A549 (cell line): ENCODE measurements at regions of chr18 and their contacts with region 1.

Region 1: DNA sequence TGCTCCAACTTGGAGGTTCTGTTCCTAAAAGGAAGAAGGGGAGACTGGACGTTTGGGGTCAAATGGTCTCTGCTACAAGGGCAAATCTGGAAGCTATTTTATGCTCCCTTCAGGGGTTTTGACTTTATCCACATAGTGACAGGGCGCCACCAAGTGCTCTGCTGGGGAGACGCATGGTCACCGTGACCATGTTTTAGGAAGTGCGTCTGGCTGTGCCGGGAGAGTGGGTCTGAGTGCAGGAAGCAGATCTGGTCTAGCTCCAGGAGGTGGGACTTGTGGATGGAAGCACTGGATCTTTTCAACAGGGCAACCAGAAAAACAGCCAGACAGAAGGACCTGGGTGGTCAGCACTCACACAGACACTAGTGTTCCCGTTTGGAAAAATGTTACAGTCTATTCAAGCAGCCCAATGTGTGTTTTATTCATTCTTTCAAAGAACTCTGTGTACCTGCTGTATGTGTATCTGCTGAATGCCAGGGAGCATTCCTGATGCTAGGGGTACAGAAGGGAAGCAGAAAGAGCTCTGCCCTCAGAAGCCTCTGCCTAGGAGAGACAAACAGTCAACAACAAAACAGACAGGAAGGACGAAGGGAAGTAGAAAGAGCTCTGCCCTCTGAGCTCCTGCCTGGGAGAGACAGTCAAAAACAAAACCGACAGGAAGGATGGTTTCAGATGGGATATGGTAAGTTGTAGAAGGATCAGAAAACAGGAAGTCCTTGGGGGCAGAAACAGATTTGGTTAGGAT is 14.3 kb downstream of the IMPA2 start:
- DNase-seq: peak; percentile 63 to 77
- ATAC-seq: peak; percentile 85 to 86
- H3K4me3 ChIP-seq: peak overlapping the region; percentile 24; the same call in 2 of the 3 replicates
- H3K27ac ChIP-seq: peak overlapping the region; percentile 85 to 96
- H3K4me1 ChIP-seq: peaks cover 44% of the 10 kb centered on the region
- CTCF ChIP-seq: peak; percentile 77
- EP300 ChIP-seq: no peak
- POLR2A ChIP-seq: no peak
- RAD21 ChIP-seq: peak; percentile 88 to 89

Region 2: GRCh38 chr18:11607906-11608305 is 387.7 kb before region 1 on chr18:
- CTCF ChIA-PET with region 1: no interaction called
- POLR2A ChIA-PET with region 1: no interaction called
- DNase-seq: no peak
- ATAC-seq: no peak
- H3K4me3 ChIP-seq: no peak overlapping the region
- H3K27ac ChIP-seq: no peak overlapping the region
- H3K4me1 ChIP-seq: no peaks in the 10 kb centered on the region
- CTCF ChIP-seq: no peak
- EP300 ChIP-seq: no peak
- POLR2A ChIP-seq: no peak
- RAD21 ChIP-seq: no peak

Region 3: GRCh38 chr18:11654736-11655605 is 340.6 kb before region 1 on chr18:
- CTCF ChIA-PET with region 1: interaction called, 43 read pairs
- POLR2A ChIA-PET with region 1: no interaction called
- DNase-seq: peak; percentile 37 to 65
- ATAC-seq: peak; percentile 88 to 93
- H3K4me3 ChIP-seq: 0 out of 3 replicates have a peak overlapping the region, but pooled peaks have one; percentile 29
- H3K27ac ChIP-seq: 0 out of 6 replicates have a peak overlapping the region, but pooled peaks of 1 of the 2 experiments have one; percentile 18
- H3K4me1 ChIP-seq: no peaks in the 10 kb centered on the region
- CTCF ChIP-seq: peak; percentile 78
- EP300 ChIP-seq: no peak
- POLR2A ChIP-seq: no peak
- RAD21 ChIP-seq: peak; percentile 76 to 84

Region 4: GRCh38 chr18:11859903-11860407 is 135.7 kb before region 1 on chr18:
- CTCF ChIA-PET with region 1: interaction called, 10 read pairs
- POLR2A ChIA-PET with region 1: no interaction called
- DNase-seq: peak; percentile 67 to 92
- ATAC-seq: peak; percentile 36 to 55; a peak in 5 of 6 replicates
- H3K4me3 ChIP-seq: peak overlapping the region; percentile 54
- H3K27ac ChIP-seq: peak overlapping the region; percentile 98 to 99
- H3K4me1 ChIP-seq: peaks cover 45% of the 10 kb centered on the region
- CTCF ChIP-seq: peak; percentile 27; the same call in 2 of the 3 replicates
- EP300 ChIP-seq: peak; percentile 56 to 84; a peak in 3 of 5 replicates
- POLR2A ChIP-seq: no peak
- RAD21 ChIP-seq: peak; percentile 25 to 32; a peak in 3 of 5 replicates

Region 5: GRCh38 chr18:11947214-11948191 is 48.1 kb before region 1 on chr18:
- CTCF ChIA-PET with region 1: interaction called, 435 read pairs
- POLR2A ChIA-PET with region 1: interaction called, 11 read pairs
- DNase-seq: peak in 1 of 2 experiments; percentile 98
- ATAC-seq: peak; percentile 91
- H3K4me3 ChIP-seq: peak overlapping the region; percentile 49
- H3K27ac ChIP-seq: peak overlapping the region; percentile 98 to 100
- H3K4me1 ChIP-seq: peaks cover 35% of the 10 kb centered on the region
- CTCF ChIP-seq: no peak
- EP300 ChIP-seq: no peak
- POLR2A ChIP-seq: no peak; the same call in 1 of the 2 replicates
- RAD21 ChIP-seq: peak in 1 of 2 experiments; percentile 1; a peak in 1 of 5 replicates

Region 6: DNA sequence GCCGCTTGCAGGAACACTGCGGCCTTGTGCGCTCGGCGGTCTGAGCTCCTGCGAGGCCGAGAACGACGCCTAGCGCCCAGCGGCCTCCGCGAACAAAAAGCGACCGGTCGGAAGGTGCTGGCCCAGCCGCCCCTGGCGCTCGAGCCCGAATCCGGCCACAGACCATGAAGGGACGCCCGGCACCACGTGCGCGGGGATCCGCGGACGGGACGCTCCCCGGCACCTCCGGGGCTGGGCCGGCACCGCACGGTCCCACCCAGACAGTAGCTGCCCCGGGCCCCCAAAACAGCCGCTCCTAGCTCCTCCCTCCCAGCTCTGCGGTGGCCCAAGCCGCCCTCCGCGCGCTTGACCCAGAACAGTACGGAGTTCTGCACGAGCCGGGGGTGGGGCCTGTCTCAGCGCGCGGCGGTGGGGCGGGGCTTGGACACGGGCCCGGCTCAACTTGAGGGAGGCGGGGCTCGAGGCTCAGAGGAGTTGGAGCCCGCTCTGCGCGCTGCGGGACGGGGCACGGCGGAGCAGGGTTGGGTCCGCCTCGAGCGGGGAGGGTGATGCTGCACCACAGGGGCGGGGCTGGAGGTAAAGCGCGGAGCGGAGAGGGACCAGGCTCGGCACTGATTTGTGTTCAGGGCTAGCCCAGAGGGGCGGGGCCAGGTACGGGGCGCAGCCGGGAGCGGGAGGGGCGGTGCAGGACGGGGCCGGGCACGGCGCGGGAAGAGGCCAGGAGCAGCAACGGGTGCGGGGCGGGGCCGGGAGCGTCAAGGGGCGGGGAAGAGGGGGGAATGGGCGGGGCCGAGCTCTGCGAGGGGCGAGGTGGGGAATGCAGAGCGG is 14.8 kb before region 1 on chr18:
- CTCF ChIA-PET with region 1: interaction called, 51 read pairs
- POLR2A ChIA-PET with region 1: interaction called, 27 read pairs
- DNase-seq: peak; percentile 87 to 98
- ATAC-seq: peak; percentile 87 to 95
- H3K4me3 ChIP-seq: peak overlapping the region; percentile 55
- H3K27ac ChIP-seq: peak overlapping the region; percentile 97 to 99
- H3K4me1 ChIP-seq: peaks cover 36% of the 10 kb centered on the region
- CTCF ChIP-seq: no peak
- EP300 ChIP-seq: no peak
- POLR2A ChIP-seq: peak; percentile 67
- RAD21 ChIP-seq: no peak

Region 7: GRCh38 chr18:12015416-12016062 is 19.9 kb after region 1 on chr18:
- CTCF ChIA-PET with region 1: interaction called, 13 read pairs
- POLR2A ChIA-PET with region 1: no interaction called
- DNase-seq: no peak
- ATAC-seq: no peak
- H3K4me3 ChIP-seq: no peak overlapping the region
- H3K27ac ChIP-seq: no peak overlapping the region
- H3K4me1 ChIP-seq: no peaks in the 10 kb centered on the region
- CTCF ChIP-seq: no peak
- EP300 ChIP-seq: no peak
- POLR2A ChIP-seq: no peak
- RAD21 ChIP-seq: no peak

Region 8: DNA sequence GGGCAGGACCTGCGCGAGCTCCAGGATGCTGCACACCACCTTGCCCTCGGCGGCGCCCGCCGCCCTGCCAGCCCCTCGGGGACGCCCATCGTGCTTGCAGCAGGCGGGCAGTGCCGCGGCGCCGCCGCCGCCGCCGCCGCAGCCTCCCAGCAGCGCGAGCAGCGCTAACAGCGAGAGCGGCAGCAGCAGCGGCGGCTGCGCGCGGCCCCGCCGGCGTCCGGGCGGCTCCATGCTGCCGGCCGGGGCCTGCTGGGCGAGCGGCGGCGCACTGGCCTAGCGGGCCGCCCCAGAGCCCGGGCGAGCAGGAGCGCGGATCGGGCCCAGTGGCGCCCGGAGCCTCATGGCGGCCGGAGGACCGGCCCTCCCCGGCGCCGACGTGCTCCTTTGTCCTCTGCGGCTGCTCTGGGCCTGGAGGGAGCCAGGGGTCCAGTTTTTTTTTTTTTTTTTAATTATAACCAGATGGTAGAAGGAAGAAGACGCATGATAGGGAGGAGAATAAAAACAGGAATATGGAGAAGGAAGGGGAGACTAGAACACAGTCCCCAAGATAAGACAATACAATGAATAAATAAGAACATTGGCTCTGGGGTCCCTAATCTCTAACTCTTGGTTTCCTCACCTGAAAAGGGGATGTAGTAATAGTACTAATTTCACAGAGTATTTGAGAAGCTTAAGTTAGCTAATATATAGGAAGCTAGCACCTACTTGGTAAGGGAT is 81.0 kb after region 1 on chr18:
- CTCF ChIA-PET with region 1: no interaction called
- POLR2A ChIA-PET with region 1: no interaction called
- DNase-seq: peak; percentile 26 to 27
- ATAC-seq: peak; percentile 94 to 95
- H3K4me3 ChIP-seq: peak overlapping the region; percentile 37
- H3K27ac ChIP-seq: peak overlapping the region; percentile 76 to 89
- H3K4me1 ChIP-seq: no peaks in the 10 kb centered on the region
- CTCF ChIP-seq: no peak
- EP300 ChIP-seq: no peak
- POLR2A ChIP-seq: peak; percentile 38
- RAD21 ChIP-seq: no peak

Region 9: DNA sequence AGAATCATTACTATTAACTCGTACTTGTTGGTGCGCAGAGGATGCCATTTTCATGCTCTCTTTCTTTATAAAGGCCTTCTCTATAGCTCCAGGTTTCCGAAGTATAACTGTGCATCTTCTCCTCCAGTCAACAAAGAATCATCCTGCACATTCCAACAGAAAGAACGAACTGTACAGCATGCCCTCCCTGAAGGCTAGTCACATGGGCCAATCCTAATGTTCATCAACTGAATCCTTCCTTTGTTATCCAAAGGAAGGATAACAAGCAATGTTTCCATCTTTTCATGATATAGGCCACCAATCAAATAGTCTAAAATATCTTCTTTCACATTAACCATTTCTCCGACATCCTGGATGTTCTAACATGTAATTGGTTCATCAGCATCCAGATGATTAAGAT is 1156.0 kb after region 1 on chr18:
- CTCF ChIA-PET with region 1: no interaction called
- POLR2A ChIA-PET with region 1: no interaction called
- DNase-seq: no peak
- ATAC-seq: no peak
- H3K4me3 ChIP-seq: no peak overlapping the region
- H3K27ac ChIP-seq: no peak overlapping the region
- H3K4me1 ChIP-seq: no peaks in the 10 kb centered on the region
- CTCF ChIP-seq: no peak
- EP300 ChIP-seq: no peak
- POLR2A ChIP-seq: no peak
- RAD21 ChIP-seq: no peak